MCF 10A (cell line): ENCODE measurements at regions of chr18 and their contacts with region 1.

Region 1: GRCh38 chr18:26621161-26622026 is 73.0 kb upstream of the KCTD1 start:
- DNase-seq: peak; percentile 77
- H3K4me3 Mint-ChIP-seq: peak overlapping the region; percentile 66
- H3K27ac Mint-ChIP-seq: no peak overlapping the region
- H3K4me1 Mint-ChIP-seq: peaks cover 9% of the 10 kb centered on the region
- H3K27me3 Mint-ChIP-seq: no peaks in the 10 kb centered on the region
- CTCF ChIP-seq: peak; percentile 75

Region 2: GRCh38 chr18:26405190-26405801 is 216.1 kb before region 1 on chr18:
- CTCF ChIA-PET with region 1: interaction called, 22 read pairs
- POLR2A ChIA-PET with region 1: no interaction called
- intact Hi-C with region 1: loop called (anchors 1 kb)
- DNase-seq: peak; percentile 64
- H3K4me3 Mint-ChIP-seq: no peak overlapping the region
- H3K27ac Mint-ChIP-seq: no peak overlapping the region
- H3K4me1 Mint-ChIP-seq: peaks cover 11% of the 10 kb centered on the region
- H3K27me3 Mint-ChIP-seq: no peaks in the 10 kb centered on the region
- CTCF ChIP-seq: peak; percentile 57

Region 3: GRCh38 chr18:26656944-26657536 is 35.6 kb after region 1 on chr18:
- CTCF ChIA-PET with region 1: interaction called, 10 read pairs
- POLR2A ChIA-PET with region 1: interaction called, 11 read pairs
- intact Hi-C with region 1: no loop called
- DNase-seq: peak; percentile 73
- H3K4me3 Mint-ChIP-seq: peak overlapping the region; percentile 99
- H3K27ac Mint-ChIP-seq: peak overlapping the region; percentile 94
- H3K4me1 Mint-ChIP-seq: peaks cover 14% of the 10 kb centered on the region
- H3K27me3 Mint-ChIP-seq: no peaks in the 10 kb centered on the region
- CTCF ChIP-seq: peak; percentile 15

Region 4: GRCh38 chr18:26963292-26963691 is 341.9 kb after region 1 on chr18:
- CTCF ChIA-PET with region 1: interaction called, 22 read pairs
- POLR2A ChIA-PET with region 1: no interaction called
- intact Hi-C with region 1: loop called (anchors 1 kb)
- DNase-seq: peak; percentile 33
- H3K4me3 Mint-ChIP-seq: no peak overlapping the region
- H3K27ac Mint-ChIP-seq: no peak overlapping the region
- H3K4me1 Mint-ChIP-seq: no peaks in the 10 kb centered on the region
- H3K27me3 Mint-ChIP-seq: no peaks in the 10 kb centered on the region
- CTCF ChIP-seq: peak; percentile 37